MCF 10A (cell line): ENCODE measurements at regions of chr7 and their contacts with region 1.

Region 1: GRCh38 chr7:35037526-35038339 is 448 bp upstream of the DPY19L1 start:
- DNase-seq: peak; percentile 87
- H3K4me3 Mint-ChIP-seq: peak overlapping the region; percentile 90
- H3K27ac Mint-ChIP-seq: peak overlapping the region; percentile 3
- H3K4me1 Mint-ChIP-seq: peaks cover 20% of the 10 kb centered on the region
- H3K27me3 Mint-ChIP-seq: peaks cover 16% of the 10 kb centered on the region
- CTCF ChIP-seq: peak; percentile 82

Region 2: DNA sequence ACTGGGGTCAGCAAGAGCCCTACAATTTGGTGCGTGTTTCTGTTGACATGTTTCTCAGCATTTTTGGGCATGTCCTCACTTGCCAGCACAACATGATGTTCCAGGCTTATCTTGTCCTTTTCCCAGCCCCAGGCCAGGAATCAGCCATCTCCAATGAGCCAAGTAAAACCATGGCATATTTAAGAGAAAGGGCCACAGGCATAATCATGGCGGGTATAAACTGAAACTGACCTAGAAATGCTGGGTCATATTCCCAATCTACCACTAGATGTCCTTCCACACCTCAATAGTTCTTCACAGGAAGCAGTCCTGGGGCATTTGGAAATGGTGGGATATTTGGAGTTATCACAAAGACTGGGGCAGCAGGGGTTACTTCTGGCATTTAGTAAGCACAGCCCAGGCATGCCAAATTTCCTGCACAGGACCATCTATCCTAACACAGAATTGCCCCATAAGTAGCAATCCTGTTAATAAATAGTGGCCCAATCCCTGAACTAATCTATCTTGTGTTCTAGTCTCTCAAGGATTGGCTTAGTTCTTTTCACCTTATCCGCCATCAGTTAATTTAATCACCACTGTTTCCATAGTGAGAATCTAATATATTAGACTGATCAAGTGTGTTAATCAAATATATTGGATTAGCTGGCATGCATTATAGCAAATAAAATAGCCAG is 278.1 kb before region 1 on chr7:
- CTCF ChIA-PET with region 1: interaction called, 3 read pairs
- POLR2A ChIA-PET with region 1: no interaction called
- intact Hi-C with region 1: loop called (anchors 1 kb)
- DNase-seq: peak; percentile 58
- H3K4me3 Mint-ChIP-seq: no peak overlapping the region
- H3K27ac Mint-ChIP-seq: peak overlapping the region; percentile 44
- H3K4me1 Mint-ChIP-seq: peaks cover 4% of the 10 kb centered on the region
- H3K27me3 Mint-ChIP-seq: no peaks in the 10 kb centered on the region
- CTCF ChIP-seq: peak; percentile 56

Region 3: DNA sequence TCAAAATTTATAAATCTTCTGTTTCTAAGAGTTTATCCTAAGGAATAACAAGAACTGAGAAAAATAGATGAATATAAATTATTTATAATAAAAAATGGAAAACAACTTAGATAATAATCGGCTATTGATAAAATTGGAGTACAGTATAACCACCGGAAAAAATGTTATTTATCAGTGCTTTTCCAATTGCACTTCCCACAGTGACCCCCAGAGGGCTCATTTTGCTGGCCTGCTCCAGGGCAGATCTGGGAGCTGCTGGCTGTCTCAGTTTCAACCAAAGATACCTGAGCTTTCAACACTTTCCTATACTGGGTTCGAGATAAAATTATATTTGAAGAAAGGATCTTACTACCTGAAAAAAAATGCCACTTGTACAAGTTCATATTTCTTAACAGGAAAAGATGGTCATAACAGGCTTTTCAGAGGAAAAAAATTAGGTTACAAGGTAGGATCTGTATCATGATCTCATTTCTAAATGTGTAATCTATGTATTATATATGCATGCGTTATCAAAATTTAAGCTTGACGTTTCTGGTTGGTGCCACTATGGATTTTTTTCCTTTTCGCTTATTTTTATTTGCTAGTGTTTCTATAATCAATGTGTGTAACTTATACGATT is 214.0 kb before region 1 on chr7:
- CTCF ChIA-PET with region 1: interaction called, 21 read pairs
- POLR2A ChIA-PET with region 1: interaction called, 3 read pairs
- intact Hi-C with region 1: loop called (anchors 1 kb)
- DNase-seq: peak; percentile 57
- H3K4me3 Mint-ChIP-seq: no peak overlapping the region
- H3K27ac Mint-ChIP-seq: no peak overlapping the region
- H3K4me1 Mint-ChIP-seq: no peaks in the 10 kb centered on the region
- H3K27me3 Mint-ChIP-seq: peaks cover 10% of the 10 kb centered on the region
- CTCF ChIP-seq: peak; percentile 92

Region 4: GRCh38 chr7:34845666-34846361 is 191.9 kb before region 1 on chr7:
- CTCF ChIA-PET with region 1: interaction called, 3 read pairs
- POLR2A ChIA-PET with region 1: no interaction called
- intact Hi-C with region 1: loop called (anchors 5 kb)
- DNase-seq: peak; percentile 61
- H3K4me3 Mint-ChIP-seq: no peak overlapping the region
- H3K27ac Mint-ChIP-seq: no peak overlapping the region
- H3K4me1 Mint-ChIP-seq: peaks cover 9% of the 10 kb centered on the region
- H3K27me3 Mint-ChIP-seq: no peaks in the 10 kb centered on the region
- CTCF ChIP-seq: no peak

Region 5: GRCh38 chr7:34879871-34880270 is 157.9 kb before region 1 on chr7:
- CTCF ChIA-PET with region 1: no interaction called
- POLR2A ChIA-PET with region 1: no interaction called
- intact Hi-C with region 1: no loop called
- DNase-seq: no peak
- H3K4me3 Mint-ChIP-seq: no peak overlapping the region
- H3K27ac Mint-ChIP-seq: no peak overlapping the region
- H3K4me1 Mint-ChIP-seq: no peaks in the 10 kb centered on the region
- H3K27me3 Mint-ChIP-seq: no peaks in the 10 kb centered on the region
- CTCF ChIP-seq: no peak

Region 6: DNA sequence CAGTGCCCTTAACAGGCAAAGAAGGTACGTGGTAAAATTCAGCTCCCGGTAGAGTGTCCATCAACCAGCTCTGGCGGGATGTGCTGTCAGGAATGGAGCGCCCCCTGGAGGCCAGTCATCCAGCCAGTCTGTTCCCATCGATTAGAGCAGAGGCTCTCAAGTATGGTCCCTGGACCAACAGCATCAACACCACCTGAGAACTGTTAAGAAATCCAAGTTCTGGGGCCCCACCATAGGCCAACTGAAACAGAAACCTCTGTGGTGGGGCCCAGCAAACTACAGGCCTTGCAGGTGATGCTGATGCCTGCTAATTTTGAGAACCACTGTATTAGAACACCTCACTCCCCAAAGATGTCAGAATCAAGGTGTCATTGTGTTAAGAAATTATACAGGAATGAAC is 109.7 kb before region 1 on chr7:
- CTCF ChIA-PET with region 1: no interaction called
- POLR2A ChIA-PET with region 1: no interaction called
- intact Hi-C with region 1: loop called (anchors 10 kb)
- DNase-seq: peak; percentile 56
- H3K4me3 Mint-ChIP-seq: no peak overlapping the region
- H3K27ac Mint-ChIP-seq: no peak overlapping the region
- H3K4me1 Mint-ChIP-seq: no peaks in the 10 kb centered on the region
- H3K27me3 Mint-ChIP-seq: no peaks in the 10 kb centered on the region
- CTCF ChIP-seq: peak; percentile 41

Region 7: GRCh38 chr7:35003679-35004303 is 33.9 kb before region 1 on chr7:
- CTCF ChIA-PET with region 1: interaction called, 4 read pairs
- POLR2A ChIA-PET with region 1: interaction called, 6 read pairs
- intact Hi-C with region 1: loop called (anchors 5 kb)
- DNase-seq: peak; percentile 91
- H3K4me3 Mint-ChIP-seq: peak overlapping the region; percentile 36
- H3K27ac Mint-ChIP-seq: peak overlapping the region; percentile 79
- H3K4me1 Mint-ChIP-seq: peaks cover 22% of the 10 kb centered on the region
- H3K27me3 Mint-ChIP-seq: no peaks in the 10 kb centered on the region
- CTCF ChIP-seq: no peak